Activated T-helper 2 cell treated with anti-CD3 and anti-CD28 coated beads, Interferon-gamma antibody, Interleukin-2, Interleukin-4, amounts not matched to agents 10 μg/mL and 5 μg/mL and 100 μg/mL, durations not matched to agents 14 hours and 24 hours and 36 hours (primary cell): ENCODE measurements at regions of chr6 and their contacts with region 1.

Region 1: GRCh38 chr6:90230548-90231215 is 66.0 kb downstream of the BACH2 start:
- DNase-seq: no peak
- H3K4me3 Mint-ChIP-seq: peak overlapping the region; percentile 7
- H3K27ac Mint-ChIP-seq: peak overlapping the region; percentile 33
- H3K4me1 Mint-ChIP-seq: peaks cover 81% of the 10 kb centered on the region
- H3K27me3 Mint-ChIP-seq: no peaks in the 10 kb centered on the region

Region 2: DNA sequence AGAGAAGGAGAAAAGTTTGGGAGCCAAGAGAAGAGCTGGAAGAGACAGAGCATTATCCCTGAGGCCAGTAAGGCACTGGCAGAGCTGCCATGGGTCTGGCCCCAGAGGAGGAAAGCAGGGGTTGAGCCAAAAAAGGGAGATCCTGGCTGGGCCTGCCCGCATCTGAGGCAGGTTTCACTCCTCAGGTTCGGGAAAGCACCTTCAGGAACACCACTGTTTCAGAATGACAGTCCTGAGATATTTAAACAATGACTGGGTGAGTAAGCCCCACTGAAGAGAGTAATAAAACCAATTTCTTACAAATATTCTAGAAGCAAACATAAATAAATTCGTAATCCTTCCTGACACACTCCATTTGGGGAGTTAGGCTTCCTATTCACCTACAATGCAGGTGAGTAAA is 86.3 kb before region 1 on chr6:
- intact Hi-C with region 1: loop called (anchors 1 kb)
- DNase-seq: no peak
- H3K4me3 Mint-ChIP-seq: peak overlapping the region; percentile 54
- H3K27ac Mint-ChIP-seq: peak overlapping the region; percentile 92
- H3K4me1 Mint-ChIP-seq: peaks cover 68% of the 10 kb centered on the region
- H3K27me3 Mint-ChIP-seq: no peaks in the 10 kb centered on the region

Region 3: DNA sequence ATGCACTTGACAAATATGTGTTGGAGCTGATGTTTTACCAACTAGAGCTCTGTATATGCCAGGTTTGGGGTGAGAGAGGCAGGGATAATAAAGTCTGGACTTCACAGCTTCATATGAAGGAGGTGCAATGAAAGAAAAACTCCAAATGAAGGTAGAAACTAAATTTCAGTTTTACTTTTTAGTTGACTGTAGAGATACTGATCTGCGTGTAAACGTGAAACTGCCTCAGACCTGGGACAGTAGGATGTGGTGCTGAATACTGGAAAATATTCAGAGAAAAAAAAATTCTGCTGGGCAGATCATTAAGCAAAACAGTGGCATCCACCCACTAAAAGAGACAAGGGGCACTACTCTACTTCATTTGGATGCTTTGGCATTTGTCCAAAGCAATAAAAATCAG is 28.5 kb before region 1 on chr6:
- intact Hi-C with region 1: loop called (anchors 1 kb)
- DNase-seq: no peak
- H3K4me3 Mint-ChIP-seq: peak overlapping the region; percentile 50
- H3K27ac Mint-ChIP-seq: peak overlapping the region; percentile 52
- H3K4me1 Mint-ChIP-seq: peaks cover 37% of the 10 kb centered on the region
- H3K27me3 Mint-ChIP-seq: no peaks in the 10 kb centered on the region

Region 4: GRCh38 chr6:90212274-90212673 is 18.4 kb before region 1 on chr6:
- intact Hi-C with region 1: no loop called
- DNase-seq: no peak
- H3K4me3 Mint-ChIP-seq: no peak overlapping the region
- H3K27ac Mint-ChIP-seq: no peak overlapping the region
- H3K4me1 Mint-ChIP-seq: peaks cover 37% of the 10 kb centered on the region
- H3K27me3 Mint-ChIP-seq: no peaks in the 10 kb centered on the region

Region 5: GRCh38 chr6:90251295-90251992 is 20.8 kb after region 1 on chr6:
- intact Hi-C with region 1: loop called (anchors 1 kb)
- DNase-seq: no peak
- H3K4me3 Mint-ChIP-seq: peak overlapping the region; percentile 48
- H3K27ac Mint-ChIP-seq: peak overlapping the region; percentile 83
- H3K4me1 Mint-ChIP-seq: peaks cover 71% of the 10 kb centered on the region
- H3K27me3 Mint-ChIP-seq: no peaks in the 10 kb centered on the region